ENCODE measurements at regions of chr5 and their contacts with region 1.

Region 1: DNA sequence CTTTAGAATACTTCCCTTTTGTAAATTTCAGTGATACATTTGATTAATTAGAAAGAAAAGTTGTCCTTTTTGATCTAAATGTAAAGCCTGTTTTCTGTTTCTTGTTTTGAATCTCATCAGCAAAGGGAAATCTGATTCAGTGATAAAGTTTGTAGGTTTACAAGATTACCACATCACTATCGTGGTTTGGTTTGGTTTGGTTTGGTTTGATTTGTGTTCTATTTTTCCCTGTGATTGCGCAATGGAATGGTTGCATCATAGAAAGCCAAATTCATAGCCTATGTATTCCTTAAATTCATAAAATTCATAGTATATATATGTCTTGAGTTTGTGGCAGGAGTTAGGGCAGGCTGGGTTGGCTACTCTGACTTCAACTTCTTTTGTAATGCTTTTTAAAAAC is 15.2 kb downstream of the SRFBP1 start:
- DNase-seq: no peak
- ATAC-seq: no peak
- H3K4me3 ChIP-seq: no peak overlapping the region
- H3K27ac ChIP-seq: no peak overlapping the region
- H3K4me1 ChIP-seq: peaks cover 0 to 33% (median 0%) of the 10 kb centered on the region in 12 donors
- H3K27me3 ChIP-seq: no peaks in the 10 kb centered on the region
- CTCF ChIP-seq: no peak
- POLR2A ChIP-seq: no peak

Region 2: DNA sequence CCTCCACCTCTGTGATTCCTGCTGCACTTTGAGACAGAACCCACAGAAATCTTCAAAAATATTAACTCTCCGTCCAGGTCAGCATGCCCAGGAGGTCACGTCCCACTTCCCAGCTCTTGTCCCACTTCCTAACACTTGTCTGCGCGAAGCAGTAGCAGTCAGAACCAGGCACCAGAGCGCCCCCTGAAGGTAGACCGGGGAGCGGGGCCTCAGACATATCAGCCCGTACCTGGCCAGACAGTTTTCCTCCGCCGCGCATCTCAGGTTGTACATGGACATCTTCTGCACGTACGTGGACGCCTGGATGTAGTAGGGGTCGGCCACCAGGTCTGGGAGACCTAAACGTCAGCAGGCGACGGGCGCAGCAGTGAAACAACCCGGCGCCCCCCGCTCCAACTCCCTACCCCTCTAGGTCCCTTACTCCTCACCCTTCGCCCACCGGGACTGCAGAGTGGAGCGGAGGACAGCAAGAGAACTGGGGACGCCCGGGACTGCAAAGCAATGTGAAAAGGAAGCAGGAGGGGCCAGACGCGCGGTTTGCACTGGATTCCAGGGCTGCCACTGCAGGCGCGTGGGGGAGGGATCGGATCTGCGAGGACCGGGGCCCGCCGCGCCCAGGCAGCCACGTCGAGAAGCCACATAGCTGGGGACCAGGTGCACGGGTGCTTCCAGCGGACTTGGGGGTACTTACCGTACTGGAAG is 99.8 kb after region 1 on chr5:
- intact Hi-C with region 1: loop called in 1 of 10 experiments (anchors 10 kb)
- DNase-seq: peak; percentile 52 to 75 (median 73)
- ATAC-seq: peak; percentile 29 to 76 (median 74)
- H3K4me3 ChIP-seq: peak overlapping the region; percentile 24 to 71 (median 62)
- H3K27ac ChIP-seq: peak overlapping the region in 5 of 12 donors; percentile 7 to 60 (median 32)
- H3K4me1 ChIP-seq: peaks cover 0 to 25% (median 14%) of the 10 kb centered on the region in 12 donors
- H3K27me3 ChIP-seq: peaks cover 0 to 31% (median 0%) of the 10 kb centered on the region in 9 donors
- CTCF ChIP-seq: peak; percentile 41 to 74 (median 66)
- POLR2A ChIP-seq: no peak

Measured in heart left ventricle (tissue), 16 donors.